Activated naive CD8-positive, alpha-beta T cell treated with anti-CD3 and anti-CD28 coated beads, Interleukin-2, amount 10 ng/mL, durations not matched to agents 7 days and 5 days (primary cell): ENCODE measurements at regions of chr3 and their contacts with region 1.

Region 1: GRCh38 chr3:45962033-45962432 is 18.8 kb downstream of the CXCR6 start:
- DNase-seq: no peak
- ATAC-seq: no peak
- H3K4me3 Mint-ChIP-seq: peak overlapping the region; percentile 35
- H3K27ac Mint-ChIP-seq: peak overlapping the region; percentile 59
- H3K4me1 Mint-ChIP-seq: peaks cover 70% of the 10 kb centered on the region
- H3K27me3 Mint-ChIP-seq: no peaks in the 10 kb centered on the region

Region 2: GRCh38 chr3:45978006-45978761 is 16.2 kb after region 1 on chr3:
- POLR2A ChIA-PET with region 1: interaction called, 22 read pairs
- DNase-seq: peak; percentile 64
- ATAC-seq: peak; percentile 55
- H3K4me3 Mint-ChIP-seq: peak overlapping the region; percentile 87
- H3K27ac Mint-ChIP-seq: peak overlapping the region; percentile 98
- H3K4me1 Mint-ChIP-seq: peaks cover 78% of the 10 kb centered on the region
- H3K27me3 Mint-ChIP-seq: no peaks in the 10 kb centered on the region

Region 3: DNA sequence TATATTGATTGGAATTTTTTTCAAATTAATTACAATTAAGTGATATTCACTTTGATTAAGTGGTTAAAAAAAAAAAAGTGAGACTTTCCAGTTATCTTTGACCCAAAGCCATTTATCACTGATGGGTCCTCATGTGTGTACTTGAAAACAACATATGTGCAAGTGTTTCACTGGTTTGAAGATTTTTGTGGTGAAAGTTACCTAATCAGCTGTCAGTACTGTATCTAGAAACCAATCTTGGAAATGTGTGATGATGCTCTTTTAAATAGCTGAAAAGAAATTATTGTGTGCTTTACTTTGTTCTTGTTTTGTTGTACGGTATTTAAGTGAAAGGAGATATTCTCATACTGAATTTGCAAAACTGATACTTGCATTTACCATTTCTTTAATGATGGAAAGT is 76.9 kb after region 1 on chr3:
- POLR2A ChIA-PET with region 1: no interaction called
- DNase-seq: no peak
- ATAC-seq: no peak
- H3K4me3 Mint-ChIP-seq: no peak overlapping the region
- H3K27ac Mint-ChIP-seq: no peak overlapping the region
- H3K4me1 Mint-ChIP-seq: peaks cover 1% of the 10 kb centered on the region
- H3K27me3 Mint-ChIP-seq: peaks cover 9% of the 10 kb centered on the region

Region 4: GRCh38 chr3:46110701-46111493 is 148.9 kb after region 1 on chr3:
- POLR2A ChIA-PET with region 1: no interaction called
- DNase-seq: no peak
- ATAC-seq: peak; percentile 81
- H3K4me3 Mint-ChIP-seq: peak overlapping the region; percentile 71
- H3K27ac Mint-ChIP-seq: peak overlapping the region; percentile 93
- H3K4me1 Mint-ChIP-seq: peaks cover 75% of the 10 kb centered on the region
- H3K27me3 Mint-ChIP-seq: no peaks in the 10 kb centered on the region